ENCODE measurements at regions of chr22 and their contacts with region 1.

Region 1: DNA sequence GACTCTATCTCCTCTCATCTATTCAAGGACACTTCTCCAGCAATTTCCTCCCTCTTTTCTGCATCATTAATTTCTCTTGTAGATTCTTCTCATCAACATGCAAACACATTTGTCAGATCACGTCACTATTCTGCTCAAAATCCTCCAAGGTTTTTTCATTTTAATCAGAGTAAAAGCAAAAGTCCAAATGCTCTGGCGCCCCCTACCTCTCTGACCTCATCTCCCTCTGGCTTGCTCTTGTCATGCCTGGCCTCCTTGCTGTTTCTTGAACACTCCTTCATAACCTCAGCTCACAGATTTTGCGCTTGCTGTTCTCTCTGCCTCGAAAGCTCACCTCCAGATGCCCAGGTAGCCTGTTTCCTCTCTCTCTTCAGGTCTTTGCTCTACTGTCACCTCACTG is 22.4 kb downstream of the RTCB start:
- DNase-seq: no peak
- H3K4me3 ChIP-seq: no peak overlapping the region
- H3K27ac ChIP-seq: no peak overlapping the region
- H3K4me1 ChIP-seq: no peaks in the 10 kb centered on the region
- H3K27me3 ChIP-seq: no peaks in the 10 kb centered on the region
- CTCF ChIP-seq: no peak
- EP300 ChIP-seq: no peak
- POLR2A ChIP-seq: no peak

Region 2: DNA sequence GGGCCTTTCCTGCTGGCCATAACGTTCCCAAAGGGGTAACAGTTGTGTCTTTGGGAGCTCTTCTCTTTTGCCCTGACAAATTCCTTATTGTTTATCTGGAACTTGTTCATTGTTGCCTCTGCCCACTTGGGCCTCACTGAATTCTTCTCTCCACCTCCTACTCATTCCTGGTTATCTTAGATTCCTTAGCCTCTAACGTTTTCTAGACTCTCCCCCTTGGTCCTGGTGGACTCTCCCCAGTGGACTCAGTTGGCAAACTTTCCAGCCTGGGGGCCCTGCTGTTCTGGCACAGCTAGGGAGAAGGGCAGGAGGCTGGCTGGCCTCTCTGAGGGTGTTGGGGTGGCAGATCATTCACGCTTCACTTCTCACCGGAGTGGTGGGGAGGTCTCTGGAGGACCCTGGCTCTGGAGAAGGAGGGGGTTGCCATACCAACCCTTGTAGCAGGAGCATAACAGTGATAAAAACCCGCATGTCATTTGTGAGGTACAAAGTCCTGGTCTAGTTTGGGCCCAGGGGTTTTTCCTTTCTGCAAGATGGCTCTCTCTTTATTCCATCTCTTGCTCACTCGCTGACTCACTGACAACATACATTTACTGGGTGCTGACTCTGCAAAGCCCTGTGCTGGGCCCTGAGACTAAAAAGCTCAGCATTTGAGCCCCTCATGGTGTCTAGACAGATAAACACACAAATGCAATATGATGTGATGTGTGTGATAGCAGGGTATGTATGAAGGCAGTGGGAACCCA is 405.6 kb before region 1 on chr22:
- intact Hi-C with region 1: loop called in 1 of 4 experiments (anchors 10 kb)
- DNase-seq: no peak
- H3K4me3 ChIP-seq: no peak overlapping the region
- H3K27ac ChIP-seq: no peak overlapping the region
- H3K4me1 ChIP-seq: no peaks in the 10 kb centered on the region
- H3K27me3 ChIP-seq: no peaks in the 10 kb centered on the region
- CTCF ChIP-seq: no peak
- EP300 ChIP-seq: no peak
- POLR2A ChIP-seq: no peak

Region 3: GRCh38 chr22:32474635-32475467 is 85.2 kb after region 1 on chr22 and contains the start of gene FBXO7:
- intact Hi-C with region 1: no loop called
- DNase-seq: peak; percentile 91 to 96 (median 93)
- H3K4me3 ChIP-seq: peak within 1 kb of the TSS; percentile 59
- H3K27ac ChIP-seq: peak within 1 kb of the TSS; percentile 92 to 97
- H3K4me1 ChIP-seq: peaks cover 7% of the 10 kb centered on the region
- H3K27me3 ChIP-seq: no peaks in the 10 kb centered on the region
- CTCF ChIP-seq: peak in 2 of 3 donors; percentile 66 to 67
- EP300 ChIP-seq: no peak
- POLR2A ChIP-seq: peak; percentile 73
- total RNA-seq, gene FBXO7: 70.7 to 94.1 (median 85.6) TPM

Measured in ovary (tissue), 10 donors.